HepG2 (cell line): ENCODE measurements at regions of chr2 and their contacts with region 1.

Region 1: GRCh38 chr2:37156857-37157714 is at the start of gene EIF2AK2:
- DNase-seq: peak; percentile 84
- ATAC-seq: peak; percentile 97
- H3K4me3 ChIP-seq: peak within 1 kb of the TSS; percentile 89 to 98 (median 94)
- H3K27ac ChIP-seq: peak within 1 kb of the TSS; percentile 74
- H3K4me1 ChIP-seq: peaks cover 61% of the 10 kb centered on the region
- H3K27me3 ChIP-seq: no peaks in the 10 kb centered on the region; a peak in 1 of 5 replicates
- CTCF ChIP-seq: peak; percentile 5; the same call in 1 of the 2 replicates
- EP300 ChIP-seq: 0 out of 4 replicates have a peak, but pooled peaks of 1 of the 2 experiments have one; percentile 36
- POLR2A ChIP-seq: peak; percentile 43 to 75; a peak in 3 of 4 replicates
- RAD21 ChIP-seq: no peak
- total RNA-seq, gene EIF2AK2: 26.1 and 42.8 TPM in 2 replicates

Region 2: GRCh38 chr2:37196320-37197195 is 39.5 kb after region 1 on chr2 and contains the start of gene CEBPZOS:
- CTCF ChIA-PET with region 1: no interaction called
- POLR2A ChIA-PET with region 1: interaction called, 7 read pairs
- in situ Hi-C with region 1: no loop called
- intact Hi-C with region 1: loop called (anchors 2 kb)
- DNase-seq: peak; percentile 80
- ATAC-seq: peak; percentile 87
- H3K4me3 ChIP-seq: peak within 1 kb of the TSS; percentile 78 to 91 (median 90)
- H3K27ac ChIP-seq: peak within 1 kb of the TSS; percentile 70
- H3K4me1 ChIP-seq: peaks cover 34% of the 10 kb centered on the region
- H3K27me3 ChIP-seq: peaks cover 2 to 3% of the 10 kb centered on the region in 2 experiments; a peak in 1 of 5 replicates
- CTCF ChIP-seq: peak; percentile 3; the same call in 1 of the 2 replicates
- EP300 ChIP-seq: no peak; a peak in 1 of 4 replicates
- POLR2A ChIP-seq: peak; percentile 85 to 98
- RAD21 ChIP-seq: peak; percentile 47; the same call in 1 of the 2 replicates
- total RNA-seq, gene CEBPZOS: 18.6 and 25.6 TPM in 2 replicates

Region 3: GRCh38 chr2:37890893-37891495 is 733.9 kb after region 1 on chr2:
- CTCF ChIA-PET with region 1: no interaction called
- POLR2A ChIA-PET with region 1: no interaction called
- in situ Hi-C with region 1: loop called (anchors 25 kb)
- intact Hi-C with region 1: no loop called
- DNase-seq: peak; percentile 71
- ATAC-seq: peak; percentile 99
- H3K4me3 ChIP-seq: no peak overlapping the region
- H3K27ac ChIP-seq: no peak overlapping the region
- H3K4me1 ChIP-seq: peaks cover 5% of the 10 kb centered on the region; the same call in 1 of the 2 replicates
- H3K27me3 ChIP-seq: peaks cover 0 to 9% of the 10 kb centered on the region in 2 experiments; a peak in 2 of 5 replicates
- CTCF ChIP-seq: peak; percentile 93
- EP300 ChIP-seq: no peak
- POLR2A ChIP-seq: no peak
- RAD21 ChIP-seq: peak; percentile 81

Region 4: DNA sequence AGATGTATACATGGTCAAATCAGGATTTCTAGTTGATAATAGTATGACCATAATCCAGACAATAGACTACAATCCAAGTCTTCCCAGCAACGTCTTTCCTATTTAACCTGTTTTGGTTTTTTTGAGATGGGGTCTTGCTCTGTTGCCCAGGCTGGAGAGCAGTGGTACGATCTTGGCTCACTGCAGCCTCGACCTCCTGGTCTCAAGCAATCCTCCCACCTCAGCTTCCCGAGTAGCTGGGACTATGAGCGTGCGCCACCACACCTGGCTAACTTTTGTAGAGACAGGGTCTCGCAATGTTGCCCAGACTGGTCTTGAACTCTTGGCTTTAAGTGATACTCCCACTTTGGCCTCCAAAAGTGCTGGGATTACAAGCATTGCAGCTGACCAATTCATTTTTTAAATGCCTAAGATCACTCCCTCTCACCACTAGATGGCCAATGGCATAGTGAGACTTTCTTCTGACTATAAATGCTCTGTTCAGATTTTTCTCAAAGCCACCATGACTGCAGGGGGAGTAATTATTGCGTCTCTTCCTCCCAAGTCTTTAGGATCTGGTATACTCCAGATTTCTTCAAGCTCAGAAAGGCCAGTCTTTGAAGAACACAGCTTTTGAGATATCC is 1398.0 kb after region 1 on chr2:
- CTCF ChIA-PET with region 1: no interaction called
- POLR2A ChIA-PET with region 1: no interaction called
- in situ Hi-C with region 1: no loop called
- intact Hi-C with region 1: no loop called
- DNase-seq: peak; percentile 50
- ATAC-seq: peak; percentile 71
- H3K4me3 ChIP-seq: no peak overlapping the region
- H3K27ac ChIP-seq: no peak overlapping the region
- H3K4me1 ChIP-seq: no peaks in the 10 kb centered on the region
- H3K27me3 ChIP-seq: no peaks in the 10 kb centered on the region
- CTCF ChIP-seq: peak; percentile 48
- EP300 ChIP-seq: no peak
- POLR2A ChIP-seq: no peak; a peak in 1 of 4 replicates
- RAD21 ChIP-seq: 0 out of 2 replicates have a peak, but pooled peaks have one; percentile 28